HAP-1 (cell line): ENCODE measurements at regions of chr4 and their contacts with region 1.

Region 1: DNA sequence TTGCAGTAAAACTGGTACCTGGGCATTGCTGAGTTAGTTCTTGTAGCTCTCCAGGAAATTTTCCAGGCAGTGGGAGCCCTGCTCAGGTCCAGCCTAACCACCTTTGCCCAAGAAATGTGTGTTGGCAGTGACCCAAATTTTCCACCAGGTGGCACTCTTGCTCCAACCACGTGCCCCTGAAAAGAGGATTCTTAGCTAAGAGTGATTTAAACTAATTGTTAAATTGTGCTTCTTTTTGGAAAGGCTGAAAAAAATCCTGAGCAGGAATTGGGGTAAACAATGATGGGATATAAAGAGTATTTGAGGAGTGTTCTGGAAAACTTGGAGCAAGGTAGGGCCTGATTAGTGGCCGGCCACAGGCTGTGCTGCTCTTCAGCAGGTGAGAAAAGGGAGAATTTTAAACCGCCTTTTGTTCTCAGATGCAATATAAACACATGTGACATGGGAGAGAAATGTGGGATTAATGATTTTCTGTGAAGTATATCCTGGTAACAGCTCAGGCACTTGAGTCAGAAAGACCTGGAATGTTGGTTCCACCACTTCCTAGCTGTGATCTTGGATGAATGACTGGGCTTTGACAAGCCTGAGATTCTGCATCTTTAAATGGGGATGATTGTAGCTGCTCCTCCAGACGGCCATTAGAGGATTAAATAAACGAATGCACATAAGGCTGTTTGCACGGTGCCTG is 219.6 kb downstream of the PTTG2 start:
- DNase-seq: peak; percentile 50 to 72
- H3K4me3 ChIP-seq: no peak overlapping the region
- H3K4me1 ChIP-seq: no peaks in the 10 kb centered on the region
- H3K27me3 ChIP-seq: peaks cover 4% of the 10 kb centered on the region; the same call in 1 of the 2 replicates

Region 2: DNA sequence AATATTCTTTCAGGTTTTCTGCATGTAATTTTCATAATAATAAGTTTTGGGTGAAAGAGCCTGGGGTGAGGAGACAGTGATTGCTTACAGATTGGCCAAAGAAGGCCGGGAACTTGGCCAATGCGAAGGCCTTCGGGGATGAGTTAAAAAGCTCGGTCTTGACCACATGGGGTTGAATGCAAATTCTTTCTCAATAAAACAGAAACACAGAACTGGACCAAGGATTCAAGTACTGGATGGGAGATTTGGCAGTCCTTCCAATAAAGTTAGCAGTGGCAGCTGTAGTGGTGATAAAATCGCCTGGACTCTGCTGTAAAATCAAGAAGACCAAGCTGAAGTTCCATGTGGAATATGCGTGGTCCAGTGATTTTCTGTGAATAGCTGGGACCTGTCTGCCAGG is 202.0 kb after region 1 on chr4:
- in situ Hi-C with region 1: no loop called
- DNase-seq: no peak
- H3K4me3 ChIP-seq: no peak overlapping the region
- H3K4me1 ChIP-seq: no peaks in the 10 kb centered on the region
- H3K27me3 ChIP-seq: no peaks in the 10 kb centered on the region

Region 3: GRCh38 chr4:38730830-38731646 is 551.2 kb after region 1 on chr4:
- in situ Hi-C with region 1: loop called (anchors 5 kb)
- DNase-seq: peak; percentile 70 to 92
- H3K4me3 ChIP-seq: no peak overlapping the region
- H3K4me1 ChIP-seq: peaks cover 7% of the 10 kb centered on the region; the same call in 1 of the 2 replicates
- H3K27me3 ChIP-seq: no peaks in the 10 kb centered on the region